Activated CD8-positive, alpha-beta memory T cell treated with anti-CD3 and anti-CD28 coated beads, Interleukin-2, amount 10 ng/mL, durations not matched to agents 7 days and 5 days (primary cell): ENCODE measurements at regions of chr19 and their contacts with region 1.

Region 1: DNA sequence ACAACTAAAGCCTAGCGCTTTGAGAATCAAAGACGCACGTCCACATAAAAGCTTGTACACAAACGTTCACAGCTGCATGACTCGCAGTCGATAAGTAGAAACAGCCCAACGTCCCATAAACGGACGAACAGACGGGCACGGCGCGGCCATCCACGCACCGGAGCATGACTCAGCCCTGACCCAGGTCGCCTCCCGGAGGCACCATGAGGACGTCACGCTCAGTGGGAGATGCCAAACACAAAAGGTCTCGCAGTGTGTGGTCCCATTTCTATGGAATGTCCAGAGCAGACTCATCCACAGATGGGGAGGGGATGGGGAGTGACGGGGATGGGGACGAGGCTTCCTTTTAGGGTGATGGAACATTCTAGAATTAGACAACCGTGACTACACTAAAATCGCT is 9.4 kb downstream of the POLRMT start:
- DNase-seq: no peak
- ATAC-seq: no peak
- H3K4me3 Mint-ChIP-seq: no peak overlapping the region
- H3K27ac Mint-ChIP-seq: no peak overlapping the region
- H3K4me1 Mint-ChIP-seq: peaks cover 2% of the 10 kb centered on the region
- H3K27me3 Mint-ChIP-seq: no peaks in the 10 kb centered on the region

Region 2: DNA sequence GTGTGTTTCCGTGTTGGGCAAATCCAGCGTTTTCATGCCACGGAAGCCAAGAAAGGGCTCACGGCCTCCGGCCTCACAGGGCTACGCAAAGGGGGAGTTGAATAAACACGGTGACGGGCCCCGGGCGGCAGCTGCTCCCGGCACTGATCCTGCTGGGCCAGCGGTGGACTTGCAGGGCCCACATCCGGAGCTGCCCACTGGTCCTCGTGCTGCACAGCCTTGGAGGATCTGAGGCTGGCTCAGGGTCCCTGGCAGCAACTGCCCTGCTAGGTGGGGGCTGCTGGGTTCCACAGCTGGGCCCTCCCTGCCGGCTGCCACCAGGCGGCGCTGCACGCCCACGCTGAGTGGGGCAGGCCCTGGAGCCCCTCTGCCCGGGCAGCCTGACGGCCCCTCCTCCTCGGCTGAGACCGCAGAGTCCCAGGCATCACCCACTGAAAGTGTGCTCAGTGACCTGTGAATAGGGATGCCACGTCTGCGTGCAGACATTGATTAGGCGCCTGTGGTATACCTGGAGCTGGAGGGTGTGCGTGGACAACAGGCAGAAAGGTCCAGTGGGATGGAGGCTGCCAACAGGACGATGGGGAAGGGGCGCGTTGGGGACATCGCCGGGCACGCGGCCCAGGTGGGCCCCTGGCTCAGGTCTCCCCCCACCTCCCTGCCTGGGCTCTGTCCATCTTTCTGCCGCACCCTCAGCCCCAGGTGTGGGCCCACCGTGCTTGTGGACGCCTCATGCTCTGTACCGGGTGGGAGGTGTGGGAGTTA is 39.6 kb before region 1 on chr19:
- CTCF ChIA-PET with region 1: interaction called, 10 read pairs
- DNase-seq: peak; percentile 66
- ATAC-seq: peak; percentile 70
- H3K4me3 Mint-ChIP-seq: no peak overlapping the region
- H3K27ac Mint-ChIP-seq: no peak overlapping the region
- H3K4me1 Mint-ChIP-seq: peaks cover 2% of the 10 kb centered on the region
- H3K27me3 Mint-ChIP-seq: peaks cover 15% of the 10 kb centered on the region